ENCODE measurements at regions of chr20 and their contacts with region 1.

Region 1: DNA sequence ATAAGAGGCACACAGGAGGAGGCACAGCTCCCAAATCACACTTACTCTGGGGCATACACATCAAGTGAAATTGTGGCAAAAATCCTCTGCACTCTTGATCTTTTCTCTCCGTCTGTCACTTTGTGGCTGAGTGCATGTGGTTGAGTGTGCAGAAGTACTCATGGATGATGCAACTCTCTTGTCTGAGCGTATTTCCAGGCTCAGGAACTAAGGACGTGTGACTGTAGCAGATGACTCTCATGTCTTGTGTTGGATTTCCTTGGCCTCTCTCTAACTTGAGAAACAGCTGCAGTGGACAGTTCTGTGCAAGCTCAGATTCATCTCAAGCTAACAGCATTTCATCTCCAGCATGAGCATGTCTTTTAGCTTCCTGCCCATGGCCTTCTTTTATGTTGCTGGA is 245.4 kb upstream of the FLRT3 start:
- DNase-seq: peak; percentile 67
- ATAC-seq: peak; percentile 5
- H3K4me3 ChIP-seq: no peak overlapping the region
- H3K27ac ChIP-seq: peak overlapping the region; percentile 81
- H3K4me1 ChIP-seq: peaks cover 41% of the 10 kb centered on the region
- H3K27me3 ChIP-seq: no peaks in the 10 kb centered on the region
- CTCF ChIP-seq: no peak

Region 2: GRCh38 chr20:14406495-14406894 is 176.4 kb before region 1 on chr20:
- CTCF ChIA-PET with region 1: no interaction called
- POLR2A ChIA-PET with region 1: no interaction called
- intact Hi-C with region 1: loop called (anchors 2 kb)
- DNase-seq: peak; percentile 94
- ATAC-seq: peak; percentile 92
- H3K4me3 ChIP-seq: peak overlapping the region; percentile 50
- H3K27ac ChIP-seq: peak overlapping the region; percentile 98
- H3K4me1 ChIP-seq: peaks cover 33% of the 10 kb centered on the region
- H3K27me3 ChIP-seq: no peaks in the 10 kb centered on the region
- CTCF ChIP-seq: no peak

Region 3: GRCh38 chr20:14488756-14489479 is 93.9 kb before region 1 on chr20:
- CTCF ChIA-PET with region 1: no interaction called
- POLR2A ChIA-PET with region 1: no interaction called
- intact Hi-C with region 1: loop called (anchors 5 kb)
- DNase-seq: peak; percentile 53
- ATAC-seq: peak; percentile 73
- H3K4me3 ChIP-seq: no peak overlapping the region
- H3K27ac ChIP-seq: peak overlapping the region; percentile 14
- H3K4me1 ChIP-seq: peaks cover 12% of the 10 kb centered on the region
- H3K27me3 ChIP-seq: no peaks in the 10 kb centered on the region
- CTCF ChIP-seq: no peak

Region 4: DNA sequence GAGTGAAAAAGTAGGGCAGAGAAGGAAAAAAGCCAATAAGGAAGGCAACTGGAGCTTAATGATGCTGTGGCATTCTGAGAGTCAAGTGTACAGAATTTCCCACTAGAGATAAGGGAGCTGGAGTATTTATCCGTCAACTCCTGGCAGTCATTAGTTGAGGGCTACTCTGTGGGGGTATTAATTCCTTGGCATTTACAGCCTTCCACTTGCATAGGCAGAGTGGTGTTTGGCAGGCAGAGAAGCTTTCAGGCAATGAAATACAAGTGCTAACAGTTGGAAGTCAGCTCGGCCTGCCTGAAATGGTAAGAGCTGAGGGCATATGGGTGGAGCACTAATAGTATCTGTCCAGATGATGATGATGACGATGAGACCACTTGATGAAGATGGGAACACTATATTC is 38.2 kb before region 1 on chr20:
- CTCF ChIA-PET with region 1: no interaction called
- POLR2A ChIA-PET with region 1: no interaction called
- intact Hi-C with region 1: no loop called
- DNase-seq: no peak
- ATAC-seq: no peak
- H3K4me3 ChIP-seq: no peak overlapping the region
- H3K27ac ChIP-seq: no peak overlapping the region
- H3K4me1 ChIP-seq: no peaks in the 10 kb centered on the region
- H3K27me3 ChIP-seq: no peaks in the 10 kb centered on the region
- CTCF ChIP-seq: no peak

Region 5: GRCh38 chr20:14616003-14616402 is 33.1 kb after region 1 on chr20:
- CTCF ChIA-PET with region 1: no interaction called
- POLR2A ChIA-PET with region 1: interaction called, 3 read pairs
- intact Hi-C with region 1: loop called (anchors 1 kb)
- DNase-seq: peak; percentile 89
- ATAC-seq: peak; percentile 97
- H3K4me3 ChIP-seq: no peak overlapping the region
- H3K27ac ChIP-seq: peak overlapping the region; percentile 27
- H3K4me1 ChIP-seq: peaks cover 16% of the 10 kb centered on the region
- H3K27me3 ChIP-seq: no peaks in the 10 kb centered on the region
- CTCF ChIP-seq: no peak

Region 6: DNA sequence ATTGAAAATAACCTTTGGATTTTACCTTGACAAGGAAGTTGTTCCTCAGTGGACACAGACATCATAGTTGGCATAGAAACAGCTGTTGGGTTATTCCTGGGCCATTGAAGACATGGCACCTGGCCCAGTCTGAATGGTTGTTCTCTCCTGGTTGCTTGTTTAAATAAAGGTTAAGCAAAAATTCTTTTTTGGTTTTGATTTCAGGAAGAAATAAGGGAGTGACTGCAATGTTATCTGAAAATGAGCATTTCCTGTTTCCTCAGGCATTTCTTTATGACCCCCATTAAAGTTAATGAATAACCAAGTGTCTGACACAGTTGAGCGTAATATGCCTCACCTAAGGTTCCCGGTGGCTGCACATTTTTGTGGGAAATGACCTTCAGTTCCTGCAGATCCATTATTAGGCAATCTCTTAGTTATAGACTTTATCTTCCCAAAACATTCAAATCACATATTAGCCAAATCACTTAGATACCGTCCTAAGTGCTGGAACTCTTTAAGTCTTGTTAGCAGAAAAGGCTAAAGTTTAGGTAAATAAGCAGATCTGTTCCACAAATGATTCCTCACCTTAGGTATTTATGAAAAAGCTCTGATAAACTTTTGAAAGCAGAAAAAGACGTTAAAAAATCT is 403.3 kb after region 1 on chr20:
- CTCF ChIA-PET with region 1: no interaction called
- POLR2A ChIA-PET with region 1: no interaction called
- intact Hi-C with region 1: loop called (anchors 10 kb)
- DNase-seq: peak; percentile 96
- ATAC-seq: peak; percentile 80
- H3K4me3 ChIP-seq: no peak overlapping the region
- H3K27ac ChIP-seq: peak overlapping the region; percentile 91
- H3K4me1 ChIP-seq: peaks cover 33% of the 10 kb centered on the region
- H3K27me3 ChIP-seq: no peaks in the 10 kb centered on the region
- CTCF ChIP-seq: no peak

Measured in PC-3 (cell line).